Activated T-helper 2 cell treated with anti-CD3 and anti-CD28 coated beads, Interferon-gamma antibody, Interleukin-2, Interleukin-4, amounts not matched to agents 10 μg/mL and 5 μg/mL and 100 μg/mL, durations not matched to agents 14 hours and 24 hours and 36 hours (primary cell): ENCODE measurements at regions of chr20 and their contacts with region 1.

Region 1: GRCh38 chr20:44310664-44311639 is at the start of gene FITM2:
- DNase-seq: peak; percentile 97
- H3K4me3 Mint-ChIP-seq: peak within 1 kb of the TSS; percentile 87
- H3K27ac Mint-ChIP-seq: peak within 1 kb of the TSS; percentile 84
- H3K4me1 Mint-ChIP-seq: peaks cover 14% of the 10 kb centered on the region
- H3K27me3 Mint-ChIP-seq: no peaks in the 10 kb centered on the region
- total RNA-seq, gene FITM2: 2.4 and 2.5 TPM in 2 replicates

Region 2: GRCh38 chr20:43590392-43591323 is 720.3 kb before region 1 on chr20 and contains the start of gene IFT52:
- intact Hi-C with region 1: loop called (anchors 5 kb)
- DNase-seq: peak; percentile 85
- H3K4me3 Mint-ChIP-seq: peak within 1 kb of the TSS; percentile 87
- H3K27ac Mint-ChIP-seq: peak within 1 kb of the TSS; percentile 93
- H3K4me1 Mint-ChIP-seq: peaks cover 12% of the 10 kb centered on the region
- H3K27me3 Mint-ChIP-seq: peaks cover under 1% of the 10 kb centered on the region
- total RNA-seq, gene IFT52: 17.7 and 19.0 TPM in 2 replicates

Region 3: DNA sequence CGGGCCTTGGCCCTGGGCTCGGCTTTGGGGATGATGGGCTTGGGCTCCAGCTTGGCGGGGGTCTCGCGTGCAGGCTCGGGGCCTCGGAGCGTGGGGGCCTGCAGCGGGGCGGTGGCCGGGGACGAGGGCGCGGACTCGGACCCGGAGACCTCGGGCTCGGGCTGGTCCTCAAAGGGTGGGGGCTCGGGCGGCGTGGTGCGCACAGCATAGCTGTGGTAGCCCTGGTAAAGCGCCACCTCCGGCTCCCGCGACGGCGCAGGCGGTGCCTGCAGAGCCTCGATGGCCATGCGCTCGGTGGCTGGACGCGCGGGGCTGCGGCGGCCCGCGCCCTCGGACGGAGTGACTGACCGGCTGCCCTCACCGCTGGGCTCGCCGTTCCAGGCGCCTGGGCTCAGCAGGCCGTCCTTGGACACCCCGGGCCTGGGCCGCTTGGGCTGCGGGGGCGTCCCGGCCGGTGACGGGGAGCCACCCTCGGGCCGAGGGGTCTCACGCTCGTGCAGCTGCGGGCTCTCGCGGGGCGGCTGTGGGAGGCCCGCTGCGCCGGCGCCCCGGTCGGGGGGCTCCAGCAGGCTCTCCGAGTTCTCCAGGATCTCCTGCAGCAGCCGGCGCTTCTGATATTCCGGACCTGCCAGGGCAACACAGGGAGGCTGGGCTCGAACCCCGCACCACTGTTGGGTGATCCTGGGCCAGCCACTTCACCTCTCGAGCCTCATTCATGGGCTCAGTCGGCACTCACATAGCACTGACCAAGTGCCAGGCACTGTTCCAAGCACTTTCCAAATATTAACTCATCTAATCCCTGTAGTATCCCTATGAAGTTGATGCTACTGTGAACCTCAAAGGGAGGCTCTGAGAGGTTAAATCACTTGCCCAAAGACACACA is 194.9 kb before region 1 on chr20:
- intact Hi-C with region 1: loop called (anchors 5 kb)
- DNase-seq: no peak
- H3K4me3 Mint-ChIP-seq: no peak overlapping the region
- H3K27ac Mint-ChIP-seq: no peak overlapping the region
- H3K4me1 Mint-ChIP-seq: peaks cover 2% of the 10 kb centered on the region
- H3K27me3 Mint-ChIP-seq: peaks cover 15% of the 10 kb centered on the region

Region 4: GRCh38 chr20:44217342-44218092 is 93.4 kb before region 1 on chr20:
- intact Hi-C with region 1: loop called (anchors 1 kb)
- DNase-seq: peak; percentile 58
- H3K4me3 Mint-ChIP-seq: peak overlapping the region; percentile 81
- H3K27ac Mint-ChIP-seq: peak overlapping the region; percentile 72
- H3K4me1 Mint-ChIP-seq: peaks cover 45% of the 10 kb centered on the region
- H3K27me3 Mint-ChIP-seq: no peaks in the 10 kb centered on the region

Region 5: DNA sequence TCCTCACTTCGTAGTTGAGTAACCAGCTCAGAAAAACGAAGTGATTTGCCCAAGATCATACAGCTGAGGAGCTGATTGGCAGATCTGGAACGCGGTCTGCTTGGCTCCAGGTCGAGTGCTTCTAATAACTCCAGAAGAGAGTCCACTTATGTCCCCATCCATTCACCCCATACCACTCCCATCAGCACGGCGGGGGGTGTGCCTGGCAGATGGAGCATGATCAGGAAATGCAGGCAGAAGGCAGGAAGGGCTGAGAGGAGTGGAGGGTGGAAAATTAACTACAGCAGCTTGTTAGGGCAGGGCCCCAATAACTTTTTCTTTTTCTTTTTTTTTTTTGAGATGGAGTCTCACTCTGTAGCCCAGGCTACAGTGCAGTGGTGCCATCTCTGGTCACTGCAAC is 14.9 kb before region 1 on chr20:
- intact Hi-C with region 1: no loop called
- DNase-seq: no peak
- H3K4me3 Mint-ChIP-seq: no peak overlapping the region
- H3K27ac Mint-ChIP-seq: no peak overlapping the region
- H3K4me1 Mint-ChIP-seq: no peaks in the 10 kb centered on the region
- H3K27me3 Mint-ChIP-seq: no peaks in the 10 kb centered on the region